IMR-90 (cell line): ENCODE measurements at regions of chr4 and their contacts with region 1.

Region 1: DNA sequence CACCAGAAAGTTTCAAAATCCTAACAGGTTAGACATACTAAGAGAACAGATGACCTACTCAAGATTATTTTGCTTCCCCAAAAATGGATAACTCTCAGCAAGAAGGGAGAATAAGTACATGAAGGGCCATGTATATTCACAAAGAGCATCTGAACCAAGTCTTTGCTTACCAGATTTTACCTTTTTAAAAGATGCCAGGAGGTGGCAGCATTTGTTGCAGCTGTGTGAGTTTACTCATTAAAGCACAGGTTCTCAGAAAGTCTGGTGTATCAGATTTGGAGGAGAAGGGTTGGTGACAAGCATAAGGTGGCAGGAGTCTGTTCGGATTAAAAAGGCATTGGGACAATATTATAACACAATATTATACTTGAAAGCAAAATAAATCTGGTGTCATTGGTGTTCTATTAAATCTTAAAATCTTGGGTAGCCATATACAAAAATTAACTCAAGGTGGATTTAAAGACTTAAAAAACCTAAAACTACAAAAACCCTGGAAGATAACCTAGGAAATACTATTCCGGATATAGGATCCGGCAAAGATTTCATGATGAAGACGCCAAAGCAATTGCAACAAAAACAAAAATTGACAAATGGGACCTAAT is 51.3 kb upstream of the NFKB1 start:
- DNase-seq: peak; percentile 64
- ATAC-seq: peak; percentile 68
- H3K4me3 ChIP-seq: no peak overlapping the region
- H3K27ac ChIP-seq: no peak overlapping the region
- H3K4me1 ChIP-seq: no peaks in the 10 kb centered on the region
- H3K27me3 ChIP-seq: no peaks in the 10 kb centered on the region
- CTCF ChIP-seq: peak; percentile 70
- POLR2A ChIP-seq: no peak
- RAD21 ChIP-seq: peak; percentile 82

Region 2: DNA sequence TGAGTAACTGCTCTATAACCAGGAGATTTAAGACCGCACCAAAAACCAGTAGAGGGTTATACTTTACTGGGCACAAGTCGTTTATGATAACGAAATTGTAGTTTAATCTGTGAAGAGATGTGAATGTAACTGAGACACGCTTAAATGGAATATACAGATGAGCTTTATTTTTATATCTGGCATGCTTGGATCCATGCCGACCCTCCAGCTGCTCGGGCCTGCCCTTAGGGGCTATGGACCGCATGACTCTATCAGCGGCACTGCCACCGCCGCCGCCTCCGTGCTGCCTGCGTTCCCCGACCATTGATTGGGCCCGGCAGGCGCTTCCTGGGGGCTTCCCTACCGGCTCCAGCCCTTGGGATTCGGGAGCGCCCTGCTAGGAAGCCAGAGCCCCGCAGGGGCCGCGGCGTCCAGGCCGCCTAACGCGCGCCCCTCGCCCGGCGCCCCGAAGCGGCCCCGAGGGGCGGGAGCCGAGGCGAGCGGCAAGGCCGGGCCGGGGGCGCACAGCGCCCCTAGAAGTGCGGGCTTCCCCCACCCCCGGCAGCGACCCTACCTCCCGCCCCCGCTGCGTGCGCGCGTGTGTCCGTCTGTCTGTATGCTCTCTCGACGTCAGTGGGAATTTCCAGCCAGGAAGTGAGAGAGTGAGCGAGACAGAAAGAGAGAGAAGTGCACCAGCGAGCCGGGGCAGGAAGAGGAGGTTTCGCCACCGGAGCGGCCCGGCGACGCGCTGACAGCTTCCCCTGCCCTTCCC is 51.0 kb after region 1 on chr4 and contains the start of gene NFKB1:
- CTCF ChIA-PET with region 1: interaction called, 3 read pairs
- POLR2A ChIA-PET with region 1: interaction called, 3 read pairs
- dilution Hi-C with region 1: no loop called
- in situ Hi-C with region 1: no loop called
- intact Hi-C with region 1: loop called (anchors 5 kb)
- DNase-seq: peak; percentile 89
- ATAC-seq: peak; percentile 67
- H3K4me3 ChIP-seq: peak within 1 kb of the TSS; percentile 70
- H3K27ac ChIP-seq: peak within 1 kb of the TSS; percentile 86
- H3K4me1 ChIP-seq: peaks cover 3% of the 10 kb centered on the region; the same call in 1 of the 2 replicates
- H3K27me3 ChIP-seq: no peaks in the 10 kb centered on the region
- CTCF ChIP-seq: no peak
- POLR2A ChIP-seq: peak; percentile 72; the same call in 1 of the 2 replicates
- RAD21 ChIP-seq: no peak
- total RNA-seq, gene NFKB1: 23.6 and 24.6 TPM in 2 replicates

Region 3: GRCh38 chr4:102564399-102565059 is 114.7 kb after region 1 on chr4:
- CTCF ChIA-PET with region 1: no interaction called
- POLR2A ChIA-PET with region 1: no interaction called
- dilution Hi-C with region 1: no loop called
- in situ Hi-C with region 1: no loop called
- intact Hi-C with region 1: loop called (anchors 5 kb)
- DNase-seq: peak; percentile 81
- ATAC-seq: no peak
- H3K4me3 ChIP-seq: no peak overlapping the region
- H3K27ac ChIP-seq: no peak overlapping the region
- H3K4me1 ChIP-seq: peaks cover 5% of the 10 kb centered on the region
- H3K27me3 ChIP-seq: no peaks in the 10 kb centered on the region
- CTCF ChIP-seq: no peak
- POLR2A ChIP-seq: no peak
- RAD21 ChIP-seq: no peak

Region 4: GRCh38 chr4:102610007-102610406 is 160.2 kb after region 1 on chr4:
- CTCF ChIA-PET with region 1: no interaction called
- POLR2A ChIA-PET with region 1: no interaction called
- dilution Hi-C with region 1: no loop called
- in situ Hi-C with region 1: loop called (anchors 10 kb)
- intact Hi-C with region 1: loop called (anchors 2 kb)
- DNase-seq: peak; percentile 12
- ATAC-seq: peak; percentile 40; the same call in 1 of the 2 replicates
- H3K4me3 ChIP-seq: no peak overlapping the region
- H3K27ac ChIP-seq: no peak overlapping the region
- H3K4me1 ChIP-seq: no peaks in the 10 kb centered on the region; the same call in 1 of the 2 replicates
- H3K27me3 ChIP-seq: no peaks in the 10 kb centered on the region
- CTCF ChIP-seq: peak; percentile 41
- POLR2A ChIP-seq: no peak
- RAD21 ChIP-seq: peak; percentile 26; the same call in 1 of the 2 replicates

Region 5: DNA sequence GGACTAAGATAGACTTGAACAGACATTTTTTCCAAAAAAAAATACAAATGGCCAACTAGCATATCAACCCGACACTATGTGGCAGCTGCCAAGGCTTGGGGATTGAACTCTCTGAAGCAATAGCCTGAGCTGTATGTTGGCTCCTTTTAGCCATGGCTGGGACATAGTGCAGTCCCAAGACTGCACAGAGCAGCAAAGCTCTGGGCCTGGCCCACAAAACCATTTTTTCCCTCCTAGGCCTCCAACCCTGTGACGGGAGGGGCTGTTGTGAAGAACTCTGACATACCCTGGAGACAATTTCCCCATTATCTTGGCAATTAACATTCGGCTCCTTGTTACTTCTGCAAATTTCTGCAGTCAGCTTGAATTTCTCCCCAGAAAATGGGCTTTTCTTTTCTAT is 469.0 kb after region 1 on chr4:
- CTCF ChIA-PET with region 1: no interaction called
- POLR2A ChIA-PET with region 1: no interaction called
- dilution Hi-C with region 1: no loop called
- in situ Hi-C with region 1: no loop called
- intact Hi-C with region 1: no loop called
- DNase-seq: no peak
- ATAC-seq: no peak
- H3K4me3 ChIP-seq: no peak overlapping the region
- H3K27ac ChIP-seq: no peak overlapping the region
- H3K4me1 ChIP-seq: no peaks in the 10 kb centered on the region
- H3K27me3 ChIP-seq: no peaks in the 10 kb centered on the region
- CTCF ChIP-seq: no peak
- POLR2A ChIP-seq: no peak
- RAD21 ChIP-seq: no peak

Region 6: DNA sequence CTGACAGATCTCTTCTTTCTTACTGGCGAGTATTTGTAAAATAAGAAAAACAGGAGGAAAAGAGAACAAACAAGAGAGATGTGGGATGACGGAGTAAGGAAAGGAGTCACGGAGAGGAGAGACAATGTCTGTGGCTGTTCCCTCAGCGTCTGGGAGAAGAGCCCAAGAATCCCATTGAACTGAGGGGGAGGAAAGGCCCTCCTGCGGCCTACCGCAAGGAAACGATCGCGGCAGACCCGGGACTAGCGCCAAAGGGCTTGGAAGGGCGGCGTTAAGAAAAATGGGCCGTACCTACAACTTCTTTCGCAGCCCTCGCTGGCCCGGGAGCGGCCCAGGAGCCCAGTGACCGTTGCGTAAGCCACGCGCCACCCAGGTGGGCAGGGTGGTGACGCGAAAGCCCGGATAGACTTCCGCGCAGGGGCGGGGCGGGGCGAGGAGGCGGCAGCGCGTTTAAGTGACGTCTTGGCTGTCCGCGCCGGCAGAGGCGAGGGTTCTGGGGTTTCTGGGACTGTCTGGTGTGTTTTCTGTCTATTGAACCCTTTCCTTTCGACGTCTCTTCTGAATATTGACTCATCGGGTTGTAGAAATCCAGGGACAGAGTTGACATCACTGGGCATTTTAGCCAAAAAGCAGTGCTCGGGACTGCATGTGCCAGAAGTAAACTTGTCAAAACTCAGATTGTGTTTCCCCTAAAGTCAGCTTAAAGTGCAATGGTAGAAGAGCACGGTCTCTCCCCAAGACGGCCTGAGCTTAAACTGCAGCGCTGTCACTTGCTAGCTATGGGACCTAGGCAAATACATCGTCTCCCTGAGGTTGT is 569.7 kb after region 1 on chr4 and contains the start of gene SLC9B1:
- CTCF ChIA-PET with region 1: no interaction called
- POLR2A ChIA-PET with region 1: no interaction called
- dilution Hi-C with region 1: no loop called
- in situ Hi-C with region 1: loop called (anchors 5 kb)
- intact Hi-C with region 1: no loop called
- DNase-seq: peak; percentile 97
- ATAC-seq: peak; percentile 99
- H3K4me3 ChIP-seq: peak within 1 kb of the TSS; percentile 69
- H3K27ac ChIP-seq: peak within 1 kb of the TSS; percentile 84
- H3K4me1 ChIP-seq: peaks cover 4% of the 10 kb centered on the region; the same call in 1 of the 2 replicates
- H3K27me3 ChIP-seq: no peaks in the 10 kb centered on the region
- CTCF ChIP-seq: no peak
- POLR2A ChIP-seq: peak; percentile 73; the same call in 1 of the 2 replicates
- RAD21 ChIP-seq: no peak
- total RNA-seq, gene SLC9B1: 0.18 and 0.28 TPM in 2 replicates

Region 7: GRCh38 chr4:103099691-103100392 is 650.0 kb after region 1 on chr4 and contains the start of gene BDH2:
- CTCF ChIA-PET with region 1: no interaction called
- POLR2A ChIA-PET with region 1: no interaction called
- dilution Hi-C with region 1: no loop called
- in situ Hi-C with region 1: loop called (anchors 10 kb)
- intact Hi-C with region 1: loop called (anchors 2 kb)
- DNase-seq: peak; percentile 97
- ATAC-seq: peak; percentile 90
- H3K4me3 ChIP-seq: peak within 1 kb of the TSS; percentile 50
- H3K27ac ChIP-seq: peak within 1 kb of the TSS; percentile 96
- H3K4me1 ChIP-seq: peaks cover 7% of the 10 kb centered on the region
- H3K27me3 ChIP-seq: no peaks in the 10 kb centered on the region
- CTCF ChIP-seq: peak; percentile 85
- POLR2A ChIP-seq: no peak
- RAD21 ChIP-seq: peak; percentile 79
- total RNA-seq, gene BDH2: 36.4 and 52.2 TPM in 2 replicates